Colonic mucosa (tissue), 4 donors: ENCODE measurements at regions of chr4 and their contacts with region 1.

Region 1: GRCh38 chr4:82373816-82374625 is at the start of gene HNRNPD:
- DNase-seq: peak; percentile 97
- H3K4me3 ChIP-seq: peak within 1 kb of the TSS; percentile 59
- H3K27ac ChIP-seq: peak within 1 kb of the TSS; percentile 98
- H3K4me1 ChIP-seq: peaks cover 5% of the 10 kb centered on the region
- H3K27me3 ChIP-seq: no peaks in the 10 kb centered on the region
- CTCF ChIP-seq: no peak
- total RNA-seq, gene HNRNPD: 145 to 181 TPM

Region 2: GRCh38 chr4:82136161-82136801 is 237.7 kb before region 1 on chr4:
- intact Hi-C with region 1: no loop called
- DNase-seq: no peak
- H3K4me3 ChIP-seq: no peak overlapping the region
- H3K27ac ChIP-seq: no peak overlapping the region
- H3K4me1 ChIP-seq: no peaks in the 10 kb centered on the region
- H3K27me3 ChIP-seq: no peaks in the 10 kb centered on the region
- CTCF ChIP-seq: no peak

Region 3: GRCh38 chr4:82428969-82429727 is 55.1 kb after region 1 on chr4:
- intact Hi-C with region 1: loop called (anchors 2 kb)
- DNase-seq: peak; percentile 93
- H3K4me3 ChIP-seq: peak overlapping the region; percentile 73
- H3K27ac ChIP-seq: peak overlapping the region; percentile 97
- H3K4me1 ChIP-seq: peaks cover 12% of the 10 kb centered on the region
- H3K27me3 ChIP-seq: no peaks in the 10 kb centered on the region
- CTCF ChIP-seq: peak; percentile 93

Region 4: DNA sequence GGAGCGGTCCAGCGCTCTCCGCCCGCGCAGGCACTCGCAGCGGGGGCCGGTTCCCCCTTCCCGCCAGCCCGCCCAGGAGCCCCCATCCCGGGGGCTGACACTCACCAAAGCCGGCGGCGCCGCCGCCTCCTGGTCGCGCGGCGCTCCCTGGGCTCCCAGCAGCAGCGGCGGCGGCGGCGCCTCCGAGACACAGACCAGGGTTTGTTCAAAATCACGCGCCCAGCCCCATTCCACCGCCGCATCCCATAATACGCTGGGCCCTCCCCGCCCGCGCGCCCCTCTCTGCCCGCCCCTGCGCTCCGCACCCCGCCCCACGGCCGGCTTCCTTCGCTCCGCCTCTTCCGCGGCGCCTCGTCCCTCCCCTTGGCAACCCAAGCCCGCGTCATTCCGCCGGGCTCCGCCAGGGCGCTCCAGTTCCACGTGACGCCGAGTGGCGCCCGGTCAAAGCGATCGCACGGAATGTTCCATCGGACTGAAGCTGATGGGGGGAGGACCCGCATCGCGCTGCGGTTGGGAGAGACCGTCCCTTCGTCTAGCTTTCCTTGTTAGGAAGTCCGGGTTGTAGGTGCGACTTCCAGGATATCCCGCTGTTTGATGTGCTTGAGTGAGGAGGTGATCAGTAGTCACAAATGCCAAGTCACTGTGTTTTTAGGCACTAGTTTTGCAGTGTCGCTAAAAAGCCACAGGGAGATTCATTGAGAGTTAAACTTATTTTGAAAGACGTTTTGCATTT is 638.8 kb after region 1 on chr4:
- intact Hi-C with region 1: loop called (anchors 5 kb)
- DNase-seq: peak; percentile 98
- H3K4me3 ChIP-seq: peak overlapping the region; percentile 59
- H3K27ac ChIP-seq: peak overlapping the region; percentile 80
- H3K4me1 ChIP-seq: peaks cover 7% of the 10 kb centered on the region
- H3K27me3 ChIP-seq: no peaks in the 10 kb centered on the region
- CTCF ChIP-seq: peak; percentile 49